Esophagus muscularis mucosa (tissue), 4 donors: ENCODE measurements at regions of chr10 and their contacts with region 1.

Region 1: GRCh38 chr10:32445740-32446535 is at the start of gene CCDC7:
- DNase-seq: peak; percentile 95
- H3K4me3 ChIP-seq: peak within 1 kb of the TSS; percentile 71 to 82 (median 79)
- H3K27ac ChIP-seq: peak within 1 kb of the TSS; percentile 95 to 98 (median 96)
- H3K4me1 ChIP-seq: peaks cover 4 to 21% (median 13%) of the 10 kb centered on the region in 4 donors
- H3K27me3 ChIP-seq: no peaks in the 10 kb centered on the region
- CTCF ChIP-seq: peak; percentile 62 to 73 (median 63)
- EP300 ChIP-seq: no peak
- POLR2A ChIP-seq: peak; percentile 51
- total RNA-seq, gene CCDC7: 15.1 to 72.3 (median 22.6) TPM

Region 2: DNA sequence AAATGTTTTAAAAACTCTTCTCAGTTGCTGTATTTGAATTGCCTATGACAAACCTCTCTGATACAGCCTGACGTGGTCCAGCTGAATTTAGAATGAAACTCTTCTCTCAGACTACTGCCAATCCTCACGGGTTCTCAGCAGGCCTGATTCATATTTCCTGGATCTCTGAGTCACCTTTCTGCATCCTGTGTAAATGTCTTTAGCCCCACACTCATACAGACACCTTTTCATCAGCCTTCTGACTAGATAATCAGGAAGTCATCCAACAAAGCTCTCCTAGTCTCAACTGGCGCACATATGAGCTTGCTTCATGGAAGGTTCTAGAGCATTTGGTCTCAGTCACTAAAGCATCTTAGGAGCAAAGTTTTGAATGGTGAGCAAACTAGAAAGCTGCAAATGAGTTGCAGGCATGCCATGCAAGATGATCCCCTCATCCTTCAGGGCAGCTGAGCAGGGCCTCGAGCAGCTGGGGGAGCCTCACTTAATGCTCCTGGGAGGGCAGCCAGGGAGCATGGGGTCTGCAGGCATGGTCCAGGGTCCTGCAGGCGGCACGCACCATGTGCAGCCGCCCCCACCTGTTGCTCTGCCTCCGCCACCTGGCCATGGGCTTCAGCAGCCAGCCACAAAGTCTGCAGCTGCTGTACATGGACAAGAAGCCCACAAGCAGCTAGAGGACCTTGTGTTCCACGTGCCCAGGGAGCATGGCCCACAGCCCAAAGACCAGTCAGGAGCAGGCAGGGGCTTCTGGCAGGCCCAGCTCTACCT is 700.1 kb before region 1 on chr10:
- intact Hi-C with region 1: no loop called
- DNase-seq: no peak
- H3K4me3 ChIP-seq: no peak overlapping the region
- H3K27ac ChIP-seq: no peak overlapping the region
- H3K4me1 ChIP-seq: peaks cover 17 to 25% (median 20%) of the 10 kb centered on the region in 4 donors
- H3K27me3 ChIP-seq: no peaks in the 10 kb centered on the region
- CTCF ChIP-seq: no peak
- EP300 ChIP-seq: no peak
- POLR2A ChIP-seq: no peak

Region 3: GRCh38 chr10:32055813-32056600 is 389.9 kb before region 1 on chr10 and contains the start of gene KIF5B:
- intact Hi-C with region 1: loop called (anchors 10 kb)
- DNase-seq: peak; percentile 92
- H3K4me3 ChIP-seq: peak within 1 kb of the TSS; percentile 72 to 99 (median 92)
- H3K27ac ChIP-seq: peak within 1 kb of the TSS; percentile 96 to 100 (median 99)
- H3K4me1 ChIP-seq: peaks cover 28 to 35% (median 29%) of the 10 kb centered on the region in 4 donors
- H3K27me3 ChIP-seq: no peaks in the 10 kb centered on the region
- CTCF ChIP-seq: no peak
- EP300 ChIP-seq: no peak
- POLR2A ChIP-seq: peak; percentile 98
- total RNA-seq, gene KIF5B: 253 to 317 (median 298) TPM

Region 4: GRCh38 chr10:32256613-32257437 is 189.1 kb before region 1 on chr10:
- intact Hi-C with region 1: loop called (anchors 5 kb)
- DNase-seq: no peak
- H3K4me3 ChIP-seq: no peak overlapping the region
- H3K27ac ChIP-seq: no peak overlapping the region
- H3K4me1 ChIP-seq: peaks cover 0 to 9% (median 4%) of the 10 kb centered on the region in 4 donors
- H3K27me3 ChIP-seq: no peaks in the 10 kb centered on the region
- CTCF ChIP-seq: peak; percentile 87 to 93 (median 88)
- EP300 ChIP-seq: no peak
- POLR2A ChIP-seq: no peak

Region 5: DNA sequence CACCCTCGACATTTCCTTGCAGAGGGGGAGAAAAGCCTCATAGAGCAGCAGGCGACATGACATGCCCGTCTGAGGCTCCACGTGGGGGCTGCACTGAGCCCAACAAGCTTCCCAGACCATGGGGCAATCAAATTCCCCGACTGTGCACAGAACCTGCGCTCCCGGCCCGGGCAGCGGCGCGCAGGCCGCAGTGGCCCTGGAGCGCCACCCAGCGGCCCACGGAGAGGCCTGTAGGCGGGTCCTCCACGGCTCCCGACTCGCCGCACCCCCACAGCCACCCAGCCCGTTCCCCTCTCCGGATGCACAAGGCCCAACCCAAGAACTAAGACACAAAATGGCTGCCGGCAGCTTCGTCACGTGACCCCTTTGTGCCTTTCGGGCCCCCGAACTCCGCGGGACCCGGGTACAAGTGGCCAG is 99.8 kb before region 1 on chr10:
- intact Hi-C with region 1: loop called (anchors 2 kb)
- DNase-seq: peak; percentile 98
- H3K4me3 ChIP-seq: peak overlapping the region; percentile 82 to 95 (median 89)
- H3K27ac ChIP-seq: peak overlapping the region; percentile 98 to 100 (median 100)
- H3K4me1 ChIP-seq: peaks cover 54 to 83% (median 79%) of the 10 kb centered on the region in 4 donors
- H3K27me3 ChIP-seq: peaks cover 0 to 6% (median 0%) of the 10 kb centered on the region in 4 donors
- CTCF ChIP-seq: peak; percentile 94 to 99 (median 95)
- EP300 ChIP-seq: no peak
- POLR2A ChIP-seq: no peak

Region 6: DNA sequence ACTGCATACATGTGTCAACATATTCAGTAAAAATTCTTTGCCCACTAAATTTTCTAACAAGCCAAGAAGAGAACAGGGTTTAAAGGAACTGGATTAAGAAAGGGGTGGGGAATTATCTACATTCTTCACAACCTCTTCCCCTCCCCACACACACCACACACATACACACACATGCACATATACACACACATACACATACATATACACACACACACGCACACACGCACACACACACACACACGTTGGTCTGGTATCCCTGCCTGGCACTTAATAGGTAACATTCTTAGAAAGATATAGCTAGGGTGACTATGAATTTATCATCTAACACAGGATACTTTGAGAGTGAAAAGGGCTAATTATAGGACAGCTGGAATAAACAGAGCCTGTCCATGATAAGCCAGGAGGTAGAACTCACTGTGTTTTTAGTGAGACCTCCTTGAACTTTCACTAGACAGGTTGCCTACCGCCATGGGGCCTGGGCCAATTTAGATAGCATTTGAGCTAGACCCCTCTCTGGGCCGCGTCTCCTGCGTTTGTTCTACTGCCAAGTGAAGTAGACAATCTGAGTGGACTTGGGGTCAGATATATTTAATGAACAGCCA is 65.9 kb before region 1 on chr10:
- intact Hi-C with region 1: loop called (anchors 5 kb)
- DNase-seq: no peak
- H3K4me3 ChIP-seq: no peak overlapping the region
- H3K27ac ChIP-seq: peak overlapping the region; percentile 83 to 86 (median 86)
- H3K4me1 ChIP-seq: peaks cover 3 to 27% (median 22%) of the 10 kb centered on the region in 4 donors
- H3K27me3 ChIP-seq: no peaks in the 10 kb centered on the region
- CTCF ChIP-seq: no peak
- EP300 ChIP-seq: no peak
- POLR2A ChIP-seq: no peak

Region 7: GRCh38 chr10:32650246-32650655 is 204.3 kb after region 1 on chr10:
- intact Hi-C with region 1: no loop called
- DNase-seq: no peak
- H3K4me3 ChIP-seq: no peak overlapping the region
- H3K27ac ChIP-seq: no peak overlapping the region
- H3K4me1 ChIP-seq: no peaks in the 10 kb centered on the region
- H3K27me3 ChIP-seq: no peaks in the 10 kb centered on the region
- CTCF ChIP-seq: no peak
- EP300 ChIP-seq: no peak
- POLR2A ChIP-seq: no peak

Region 8: DNA sequence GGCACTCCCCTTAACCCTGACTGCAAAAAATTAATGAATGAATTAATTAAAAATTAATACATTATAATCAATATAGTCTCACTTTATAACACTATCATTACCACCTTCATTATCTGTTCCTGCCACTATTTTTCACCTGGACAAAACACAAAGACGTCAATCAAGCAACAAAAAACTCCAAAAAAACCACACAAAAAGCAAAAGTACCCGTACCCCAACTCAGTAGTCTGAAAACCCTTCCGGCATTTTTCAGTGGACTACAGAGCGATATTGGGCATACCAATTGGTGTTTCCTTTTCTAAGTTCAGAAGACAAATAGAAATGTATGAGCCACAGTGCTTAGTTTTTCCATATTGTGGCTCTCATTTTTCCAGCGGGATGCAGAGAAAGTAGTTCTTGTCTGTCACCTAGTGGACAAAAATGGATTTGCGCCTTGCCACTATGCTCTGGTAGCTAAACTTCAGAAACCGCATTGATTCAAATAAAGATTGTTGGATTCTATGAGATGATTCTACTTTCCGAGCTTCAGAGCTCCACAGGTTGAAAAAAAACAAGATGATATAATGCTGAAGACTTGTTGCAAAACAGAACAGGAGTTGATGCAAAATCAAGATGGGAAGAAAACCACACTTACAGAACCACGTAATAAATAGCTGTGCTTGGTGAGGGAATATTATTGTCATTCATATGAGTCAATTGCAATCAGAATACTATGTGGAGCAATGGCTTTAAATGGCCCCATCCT is 562.7 kb after region 1 on chr10:
- intact Hi-C with region 1: loop called (anchors 10 kb)
- DNase-seq: no peak
- H3K4me3 ChIP-seq: no peak overlapping the region
- H3K27ac ChIP-seq: peak overlapping the region in 3 of 4 donors; percentile 22 to 46 (median 46)
- H3K4me1 ChIP-seq: peaks cover 13 to 31% (median 26%) of the 10 kb centered on the region in 4 donors
- H3K27me3 ChIP-seq: no peaks in the 10 kb centered on the region
- CTCF ChIP-seq: peak in 2 of 3 experiments; percentile 99 to 100
- EP300 ChIP-seq: no peak
- POLR2A ChIP-seq: no peak